ENCODE measurements at regions of chr14 and their contacts with region 1.

Region 1: DNA sequence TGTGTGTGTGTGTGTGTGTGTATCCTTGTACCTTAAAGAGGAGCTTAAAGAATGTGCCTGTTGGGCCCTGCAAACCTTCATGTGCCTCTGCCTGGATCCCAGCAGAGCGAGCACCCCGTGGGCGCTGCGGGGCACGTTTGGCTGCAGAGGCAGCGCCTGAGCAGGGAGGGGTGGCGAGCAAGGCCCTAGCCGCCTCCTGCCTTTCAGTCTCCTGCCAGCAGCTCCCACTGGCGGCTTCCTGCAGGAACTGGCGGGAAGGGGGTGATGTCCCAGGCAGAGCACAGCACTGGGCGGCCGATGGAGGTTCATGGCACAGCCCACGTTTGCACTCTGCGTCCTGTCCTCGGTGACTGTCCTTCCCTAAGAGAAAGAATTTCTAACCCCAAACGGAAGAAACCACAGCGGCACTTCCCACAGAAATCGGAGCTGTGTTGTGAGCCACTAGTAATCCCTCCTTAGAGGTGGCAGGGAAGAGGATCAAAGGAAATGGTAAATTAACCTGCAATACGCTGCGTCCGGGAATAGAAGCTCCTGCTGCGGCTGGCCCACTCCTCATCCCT is 19.8 kb downstream of the ZBTB42 start:
- DNase-seq: peak in 1 of 2 donors; percentile 44
- ATAC-seq: peak in 6 of 8 donors; percentile 16 to 60 (median 44)
- H3K4me3 ChIP-seq: no peak overlapping the region
- H3K27ac ChIP-seq: no peak overlapping the region
- H3K4me1 ChIP-seq: peaks cover 0 to 27% (median 19%) of the 10 kb centered on the region in 9 donors
- H3K27me3 ChIP-seq: peaks cover 0 to 10% (median 0%) of the 10 kb centered on the region in 7 donors
- CTCF ChIP-seq: peak; percentile 19 to 67 (median 51)

Region 2: GRCh38 chr14:104786091-104786586 is 34.6 kb before region 1 on chr14:
- intact Hi-C with region 1: loop called in 1 of 10 experiments (anchors 5 kb)
- DNase-seq: peak in 1 of 2 donors; percentile 21
- ATAC-seq: peak; percentile 11 to 50 (median 38)
- H3K4me3 ChIP-seq: no peak overlapping the region
- H3K27ac ChIP-seq: peak overlapping the region in 1 of 10 donors; percentile 87
- H3K4me1 ChIP-seq: peaks cover 3 to 48% (median 30%) of the 10 kb centered on the region in 9 donors
- H3K27me3 ChIP-seq: no peaks in the 10 kb centered on the region
- CTCF ChIP-seq: peak in 1 of 9 donors; percentile 10

Region 3: DNA sequence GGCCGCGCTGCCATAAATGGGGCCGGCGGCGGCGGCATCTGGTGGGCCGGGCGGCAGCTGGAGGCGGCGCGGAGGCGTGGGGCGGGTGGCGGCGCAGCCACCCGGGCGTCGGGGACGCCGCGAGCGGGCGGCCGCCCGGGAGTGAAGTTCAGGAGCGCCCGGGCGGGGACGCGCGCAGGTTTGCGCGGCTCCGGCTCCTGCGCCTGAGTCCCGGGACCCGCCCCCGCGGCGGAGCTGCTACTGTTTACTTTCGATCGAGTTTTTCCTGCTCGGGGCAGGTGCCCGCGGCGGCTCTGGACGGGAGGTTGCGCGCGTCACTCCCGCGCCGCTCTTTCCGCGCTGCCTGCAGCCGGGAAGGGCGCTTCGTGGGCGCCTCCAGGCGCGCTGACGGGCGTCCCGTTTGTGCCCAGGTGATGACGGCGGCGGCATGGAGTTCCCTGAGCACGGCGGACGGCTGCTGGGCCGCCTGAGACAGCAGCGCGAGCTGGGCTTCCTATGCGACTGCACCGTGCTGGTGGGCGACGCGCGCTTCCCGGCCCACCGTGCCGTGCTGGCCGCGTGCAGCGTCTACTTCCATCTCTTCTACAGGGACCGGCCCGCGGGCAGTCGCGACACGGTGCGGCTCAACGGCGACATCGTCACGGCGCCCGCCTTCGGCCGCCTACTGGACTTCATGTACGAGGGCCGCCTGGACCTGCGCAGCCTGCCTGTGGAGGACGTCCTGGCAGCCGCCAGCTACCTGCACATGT is 19.8 kb before region 1 on chr14 and contains the start of gene ZBTB42:
- intact Hi-C with region 1: no loop called
- DNase-seq: peak in 1 of 2 donors; percentile 54
- ATAC-seq: peak in 5 of 8 donors; percentile 0 to 23 (median 4)
- H3K4me3 ChIP-seq: peak within 1 kb of the TSS; percentile 58 to 99 (median 78)
- H3K27ac ChIP-seq: peak within 1 kb of the TSS; percentile 84 to 99 (median 96)
- H3K4me1 ChIP-seq: peaks cover 16 to 76% (median 58%) of the 10 kb centered on the region in 9 donors
- H3K27me3 ChIP-seq: no peaks in the 10 kb centered on the region
- CTCF ChIP-seq: no peak
- total RNA-seq, gene ZBTB42: 4.3 to 9.2 (median 6.9) TPM

Measured in heart right ventricle (tissue), 16 donors.